ENCODE measurements at regions of chr12 and their contacts with region 1.

Region 1: GRCh38 chr12:108664338-108665258 is 30.9 kb upstream of the SELPLG start:
- DNase-seq: peak; percentile 77 to 94 (median 78)
- H3K4me3 ChIP-seq: no peak overlapping the region
- H3K27ac ChIP-seq: peak overlapping the region; percentile 35 to 42
- H3K4me1 ChIP-seq: peaks cover 6% of the 10 kb centered on the region
- H3K27me3 ChIP-seq: no peaks in the 10 kb centered on the region
- CTCF ChIP-seq: peak; percentile 84 to 97 (median 95)
- EP300 ChIP-seq: no peak
- POLR2A ChIP-seq: no peak

Region 2: DNA sequence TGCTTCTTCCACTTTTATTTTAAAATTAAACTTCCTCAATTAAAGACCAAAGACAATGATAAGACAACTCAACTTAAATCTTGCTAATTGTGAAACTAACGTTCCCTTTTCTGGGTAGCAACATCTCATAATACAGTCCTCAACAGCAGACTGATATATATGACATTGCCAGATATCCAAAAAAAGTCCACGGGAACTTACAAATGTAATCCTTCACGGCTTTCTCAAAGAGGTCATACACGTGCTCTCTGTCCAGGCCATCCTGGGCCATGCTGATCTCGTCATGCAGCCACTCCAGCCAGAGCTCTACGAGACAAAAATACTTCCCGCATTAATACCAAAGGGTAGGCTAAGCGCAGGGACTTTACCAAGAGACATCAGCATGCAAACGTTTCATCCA is 116.9 kb before region 1 on chr12:
- intact Hi-C with region 1: no loop called
- DNase-seq: no peak
- H3K4me3 ChIP-seq: no peak overlapping the region
- H3K27ac ChIP-seq: no peak overlapping the region
- H3K4me1 ChIP-seq: peaks cover 2% of the 10 kb centered on the region
- H3K27me3 ChIP-seq: no peaks in the 10 kb centered on the region
- CTCF ChIP-seq: no peak
- EP300 ChIP-seq: no peak
- POLR2A ChIP-seq: no peak

Region 3: GRCh38 chr12:108722992-108723766 is 58.6 kb after region 1 on chr12:
- intact Hi-C with region 1: loop called in 1 of 4 experiments (anchors 10 kb)
- DNase-seq: no peak
- H3K4me3 ChIP-seq: no peak overlapping the region
- H3K27ac ChIP-seq: no peak overlapping the region
- H3K4me1 ChIP-seq: peaks cover 7% of the 10 kb centered on the region
- H3K27me3 ChIP-seq: no peaks in the 10 kb centered on the region
- CTCF ChIP-seq: no peak
- EP300 ChIP-seq: no peak
- POLR2A ChIP-seq: no peak

Region 4: GRCh38 chr12:108731105-108731865 is 66.7 kb after region 1 on chr12 and contains the start of gene CORO1C:
- intact Hi-C with region 1: loop called in 2 of 4 experiments (anchors 10 kb)
- DNase-seq: peak; percentile 95 to 97 (median 97)
- H3K4me3 ChIP-seq: peak within 1 kb of the TSS; percentile 82
- H3K27ac ChIP-seq: peak within 1 kb of the TSS; percentile 91
- H3K4me1 ChIP-seq: no peaks in the 10 kb centered on the region
- H3K27me3 ChIP-seq: no peaks in the 10 kb centered on the region
- CTCF ChIP-seq: peak; percentile 62 to 89 (median 88)
- EP300 ChIP-seq: no peak
- POLR2A ChIP-seq: peak; percentile 88
- total RNA-seq, gene CORO1C: 58.7 to 143 (median 113) TPM

Region 5: DNA sequence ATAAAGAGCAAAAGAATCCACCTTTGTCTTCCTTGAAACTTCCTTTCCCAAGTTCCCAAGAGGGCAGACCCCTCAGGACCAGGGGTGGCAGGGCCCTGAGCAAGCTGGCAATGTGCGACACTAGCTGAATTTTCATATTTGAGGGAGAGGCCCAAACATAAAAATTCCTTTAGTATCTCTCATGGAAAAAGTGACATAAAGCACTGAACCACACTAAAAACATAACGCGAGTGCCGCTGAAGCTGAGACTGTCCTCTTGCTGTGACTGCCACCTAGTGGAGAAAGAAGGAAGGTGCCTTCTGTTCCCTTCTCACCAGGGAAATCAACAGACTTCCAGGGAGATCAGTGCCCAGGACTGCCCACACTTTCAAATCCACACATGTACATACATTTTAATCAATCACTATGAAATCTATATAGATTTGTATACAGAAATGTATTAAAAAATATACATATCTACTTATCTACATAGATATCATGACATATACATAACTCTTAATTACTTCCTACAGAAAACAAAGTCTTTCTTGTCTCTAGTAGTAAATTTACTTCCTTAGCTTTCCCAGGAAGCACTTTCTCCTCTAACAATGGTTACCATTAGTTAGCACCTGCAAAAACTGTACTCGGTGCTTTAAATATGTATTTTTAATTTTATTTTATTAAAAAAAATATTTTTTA is 139.0 kb after region 1 on chr12:
- intact Hi-C with region 1: loop called (anchors 2 to 5 kb)
- DNase-seq: peak; percentile 62 to 89 (median 73)
- H3K4me3 ChIP-seq: no peak overlapping the region
- H3K27ac ChIP-seq: peak overlapping the region; percentile 80 to 85
- H3K4me1 ChIP-seq: peaks cover 14% of the 10 kb centered on the region
- H3K27me3 ChIP-seq: no peaks in the 10 kb centered on the region
- CTCF ChIP-seq: peak; percentile 92 to 97 (median 96)
- EP300 ChIP-seq: no peak
- POLR2A ChIP-seq: peak; percentile 23

Region 6: DNA sequence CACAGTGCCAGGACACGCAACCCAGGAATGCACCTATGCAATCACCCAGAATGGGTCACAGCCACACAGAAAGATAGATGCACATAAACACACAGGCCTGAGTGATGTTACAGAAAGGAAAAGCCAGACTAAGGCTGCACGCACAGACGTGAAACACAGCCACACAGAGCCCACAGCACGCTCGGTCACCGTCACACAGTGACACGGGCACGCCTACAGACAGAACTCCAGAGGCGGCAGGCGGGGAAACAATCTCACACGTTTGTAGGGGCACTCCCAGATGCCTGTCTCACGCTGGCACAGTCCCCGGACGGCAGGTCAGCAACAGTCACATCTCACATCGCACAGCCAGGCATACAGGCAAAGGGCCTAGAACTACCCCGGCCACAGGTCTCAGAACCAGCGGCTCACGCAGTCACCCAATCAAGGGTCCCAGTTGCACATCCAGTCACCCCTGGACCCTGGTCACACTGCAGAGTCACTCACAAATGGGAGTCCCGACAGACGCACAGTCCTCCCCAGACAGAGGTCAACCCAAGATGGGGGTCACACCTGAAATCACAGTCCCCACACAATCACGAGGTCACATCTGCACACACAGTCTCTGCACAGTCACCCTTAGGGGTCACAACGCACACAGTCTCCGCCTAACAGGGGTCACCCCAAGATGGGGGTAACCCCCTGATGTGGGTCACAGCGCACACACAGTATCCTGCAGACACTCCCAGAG is 192.0 kb after region 1 on chr12:
- intact Hi-C with region 1: loop called in 1 of 4 experiments (anchors 5 kb)
- DNase-seq: peak; percentile 21 to 63 (median 57)
- H3K4me3 ChIP-seq: peak overlapping the region; percentile 82
- H3K27ac ChIP-seq: peak overlapping the region; percentile 67 to 70
- H3K4me1 ChIP-seq: peaks cover 6% of the 10 kb centered on the region
- H3K27me3 ChIP-seq: no peaks in the 10 kb centered on the region
- CTCF ChIP-seq: no peak
- EP300 ChIP-seq: no peak
- POLR2A ChIP-seq: no peak

Region 7: GRCh38 chr12:108950991-108951739 is 286.6 kb after region 1 on chr12:
- intact Hi-C with region 1: loop called in 1 of 4 experiments (anchors 10 kb)
- DNase-seq: peak; percentile 38 to 76 (median 72)
- H3K4me3 ChIP-seq: no peak overlapping the region
- H3K27ac ChIP-seq: no peak overlapping the region
- H3K4me1 ChIP-seq: no peaks in the 10 kb centered on the region
- H3K27me3 ChIP-seq: no peaks in the 10 kb centered on the region
- CTCF ChIP-seq: peak; percentile 62 to 88 (median 66)
- EP300 ChIP-seq: no peak
- POLR2A ChIP-seq: no peak

Region 8: GRCh38 chr12:109093022-109093918 is 428.7 kb after region 1 on chr12 and contains the start of gene ALKBH2:
- intact Hi-C with region 1: loop called in 1 of 4 experiments (anchors 10 kb)
- DNase-seq: peak; percentile 89 to 95 (median 93)
- H3K4me3 ChIP-seq: peak within 1 kb of the TSS; percentile 48
- H3K27ac ChIP-seq: peak within 1 kb of the TSS in 1 of 2 donors; percentile 63
- H3K4me1 ChIP-seq: peaks cover 7% of the 10 kb centered on the region
- H3K27me3 ChIP-seq: no peaks in the 10 kb centered on the region
- CTCF ChIP-seq: peak; percentile 96 to 98 (median 97)
- EP300 ChIP-seq: peak; percentile 79
- POLR2A ChIP-seq: peak; percentile 27
- total RNA-seq, gene ALKBH2: 11.3 to 26.4 (median 21.1) TPM

Measured in ovary (tissue), 10 donors.